Naive thymus-derived CD8-positive, alpha-beta T cell (primary cell): ENCODE measurements at regions of chr16 and their contacts with region 1.

Region 1: GRCh38 chr16:28149011-28149888 is 62.5 kb downstream of the XPO6 start:
- DNase-seq: peak; percentile 17 to 74 (median 43)
- ATAC-seq: peak; percentile 90 to 92
- H3K4me3 Mint-ChIP-seq: peak overlapping the region; percentile 9 to 81 (median 66)
- H3K27ac Mint-ChIP-seq: peak overlapping the region; percentile 87 to 99 (median 94)
- H3K4me1 Mint-ChIP-seq: peaks cover 41 to 80% (median 77%) of the 10 kb centered on the region in 4 donors
- H3K27me3 Mint-ChIP-seq: no peaks in the 10 kb centered on the region

Region 2: GRCh38 chr16:28117168-28117565 is 32.1 kb before region 1 on chr16:
- POLR2A ChIA-PET with region 1: no interaction called
- DNase-seq: no peak
- ATAC-seq: no peak
- H3K4me3 Mint-ChIP-seq: no peak overlapping the region
- H3K27ac Mint-ChIP-seq: peak overlapping the region in 7 of 10 donors; percentile 2 to 81 (median 50)
- H3K4me1 Mint-ChIP-seq: peaks cover 2 to 18% (median 14%) of the 10 kb centered on the region in 4 donors
- H3K27me3 Mint-ChIP-seq: no peaks in the 10 kb centered on the region

Region 3: DNA sequence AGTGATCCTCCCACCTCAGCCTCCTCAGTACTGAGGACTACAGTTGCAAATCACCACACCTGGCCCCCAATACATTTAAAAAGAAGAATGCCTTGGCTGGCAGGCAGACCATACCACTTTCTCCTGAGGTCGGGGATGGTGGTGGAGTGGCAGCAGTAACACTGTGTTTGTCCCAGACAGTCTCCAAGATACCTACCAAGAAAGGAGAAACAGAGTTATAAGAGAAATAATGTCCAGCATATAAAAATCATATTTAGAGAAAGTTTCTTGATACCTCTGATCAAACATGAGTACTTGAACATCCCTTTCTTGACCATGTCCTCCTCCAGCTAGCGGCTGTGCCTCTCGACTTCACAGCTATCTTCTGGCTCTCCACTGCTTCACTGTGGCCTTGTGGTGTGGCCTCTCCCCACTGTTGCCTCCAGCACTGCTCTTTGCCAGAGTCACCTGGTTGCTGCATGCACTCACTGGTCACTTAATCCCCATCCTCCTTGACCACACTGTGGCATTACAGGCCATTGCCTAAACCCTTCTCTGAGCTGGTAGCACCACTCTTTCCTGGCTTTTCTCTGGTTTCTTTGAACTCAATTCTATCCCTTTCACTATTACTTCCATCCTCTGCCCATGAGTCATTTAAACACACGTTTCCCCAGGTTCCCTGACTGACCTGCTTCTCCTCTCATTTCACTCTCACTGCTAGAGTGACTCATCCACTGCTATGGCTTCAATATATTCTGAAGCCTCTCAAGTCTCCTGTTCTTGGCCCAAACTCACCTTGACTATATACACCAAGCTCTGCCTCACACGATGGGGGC is 17.4 kb after region 1 on chr16:
- POLR2A ChIA-PET with region 1: interaction called, 12 read pairs
- DNase-seq: no peak
- ATAC-seq: no peak
- H3K4me3 Mint-ChIP-seq: peak overlapping the region in 9 of 10 donors; percentile 6 to 73 (median 49)
- H3K27ac Mint-ChIP-seq: peak overlapping the region; percentile 86 to 93 (median 91)
- H3K4me1 Mint-ChIP-seq: peaks cover 37 to 88% (median 79%) of the 10 kb centered on the region in 4 donors
- H3K27me3 Mint-ChIP-seq: no peaks in the 10 kb centered on the region

Region 4: GRCh38 chr16:28188085-28188916 is 39.1 kb after region 1 on chr16:
- POLR2A ChIA-PET with region 1: interaction called, 20 read pairs
- DNase-seq: no peak
- ATAC-seq: no peak
- H3K4me3 Mint-ChIP-seq: peak overlapping the region; percentile 60 to 83 (median 76)
- H3K27ac Mint-ChIP-seq: peak overlapping the region; percentile 77 to 97 (median 94)
- H3K4me1 Mint-ChIP-seq: peaks cover 47 to 96% (median 92%) of the 10 kb centered on the region in 4 donors
- H3K27me3 Mint-ChIP-seq: no peaks in the 10 kb centered on the region

Region 5: GRCh38 chr16:28277537-28278388 is 128.5 kb after region 1 on chr16:
- POLR2A ChIA-PET with region 1: interaction called, 10 read pairs
- DNase-seq: peak; percentile 69 to 95 (median 84)
- ATAC-seq: peak; percentile 73 to 76
- H3K4me3 Mint-ChIP-seq: peak overlapping the region; percentile 70 to 88 (median 82)
- H3K27ac Mint-ChIP-seq: peak overlapping the region; percentile 90 to 99 (median 97)
- H3K4me1 Mint-ChIP-seq: peaks cover 32 to 62% (median 47%) of the 10 kb centered on the region in 4 donors
- H3K27me3 Mint-ChIP-seq: peaks cover 0 to 10% (median 0%) of the 10 kb centered on the region in 5 donors